IMR-90 (cell line): ENCODE measurements at regions of chr1 and their contacts with region 1.

Region 1: GRCh38 chr1:62746085-62746808 is 37.7 kb upstream of the ATG4C start:
- DNase-seq: peak; percentile 70
- ATAC-seq: peak; percentile 69
- H3K4me3 ChIP-seq: no peak overlapping the region; the same call in 1 of the 2 replicates
- H3K27ac ChIP-seq: no peak overlapping the region
- H3K4me1 ChIP-seq: peaks cover 4% of the 10 kb centered on the region; the same call in 1 of the 2 replicates
- H3K27me3 ChIP-seq: no peaks in the 10 kb centered on the region
- CTCF ChIP-seq: peak; percentile 71
- POLR2A ChIP-seq: no peak
- RAD21 ChIP-seq: peak; percentile 93

Region 2: GRCh38 chr1:62175568-62176179 is 570.6 kb before region 1 on chr1:
- CTCF ChIA-PET with region 1: interaction called, 5 read pairs
- POLR2A ChIA-PET with region 1: no interaction called
- dilution Hi-C with region 1: no loop called
- in situ Hi-C with region 1: loop called (anchors 25 kb)
- intact Hi-C with region 1: loop called (anchors 2 kb)
- DNase-seq: peak; percentile 45
- ATAC-seq: peak; percentile 66
- H3K4me3 ChIP-seq: no peak overlapping the region
- H3K27ac ChIP-seq: no peak overlapping the region
- H3K4me1 ChIP-seq: no peaks in the 10 kb centered on the region
- H3K27me3 ChIP-seq: no peaks in the 10 kb centered on the region; the same call in none of the 2 replicates
- CTCF ChIP-seq: peak; percentile 79
- POLR2A ChIP-seq: no peak
- RAD21 ChIP-seq: peak; percentile 71

Region 3: GRCh38 chr1:62370594-62370993 is 375.7 kb before region 1 on chr1:
- CTCF ChIA-PET with region 1: no interaction called
- POLR2A ChIA-PET with region 1: no interaction called
- dilution Hi-C with region 1: no loop called
- in situ Hi-C with region 1: no loop called
- intact Hi-C with region 1: no loop called
- DNase-seq: no peak
- ATAC-seq: no peak
- H3K4me3 ChIP-seq: no peak overlapping the region
- H3K27ac ChIP-seq: no peak overlapping the region
- H3K4me1 ChIP-seq: no peaks in the 10 kb centered on the region
- H3K27me3 ChIP-seq: no peaks in the 10 kb centered on the region
- CTCF ChIP-seq: no peak
- POLR2A ChIP-seq: no peak
- RAD21 ChIP-seq: no peak

Region 4: GRCh38 chr1:62407405-62408009 is 338.7 kb before region 1 on chr1:
- CTCF ChIA-PET with region 1: no interaction called
- POLR2A ChIA-PET with region 1: no interaction called
- dilution Hi-C with region 1: no loop called
- in situ Hi-C with region 1: no loop called
- intact Hi-C with region 1: loop called (anchors 1 kb)
- DNase-seq: peak; percentile 55
- ATAC-seq: peak; percentile 89
- H3K4me3 ChIP-seq: no peak overlapping the region
- H3K27ac ChIP-seq: no peak overlapping the region
- H3K4me1 ChIP-seq: no peaks in the 10 kb centered on the region
- H3K27me3 ChIP-seq: peaks cover 8% of the 10 kb centered on the region
- CTCF ChIP-seq: peak; percentile 79
- POLR2A ChIP-seq: no peak
- RAD21 ChIP-seq: peak; percentile 81

Region 5: DNA sequence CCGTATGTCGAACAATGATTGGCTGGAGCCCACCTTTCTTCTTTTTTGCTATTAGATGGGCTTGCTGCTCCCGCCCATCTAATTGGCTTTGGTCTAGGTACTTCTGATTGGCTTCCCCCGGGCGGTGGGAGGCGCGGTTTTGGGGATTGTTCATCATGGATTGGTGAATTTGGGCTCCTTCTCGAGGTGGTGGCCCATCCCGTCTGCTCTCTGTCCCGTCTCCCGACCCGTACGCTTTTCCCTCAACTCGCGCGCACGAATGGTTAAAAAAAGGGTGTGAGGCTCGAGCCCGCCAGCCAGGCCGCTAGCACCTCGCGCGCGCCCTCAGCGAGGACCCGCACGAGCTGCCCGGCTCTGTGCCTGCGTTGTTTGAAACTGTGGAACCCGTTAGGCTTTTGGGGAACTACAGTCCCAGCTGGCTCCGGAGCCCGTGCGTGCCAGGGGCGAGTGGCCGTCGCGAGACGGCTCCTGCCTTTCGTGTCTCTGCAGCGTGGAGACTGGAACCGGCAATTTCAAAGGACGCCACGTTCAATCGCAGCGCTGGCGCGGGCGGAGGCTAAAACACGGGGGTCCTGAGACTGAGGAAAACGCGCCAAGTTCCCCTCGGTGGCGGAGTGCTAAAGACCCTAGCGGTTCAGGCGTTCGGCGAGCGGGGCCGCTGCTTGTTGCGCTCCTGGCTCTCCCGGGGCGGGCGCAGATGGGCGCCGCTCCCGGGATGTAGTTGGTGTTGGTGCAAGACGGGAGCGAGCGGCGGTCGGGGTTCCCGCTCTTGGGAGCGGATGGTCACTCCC is 309.6 kb before region 1 on chr1 and contains the start of gene USP1:
- CTCF ChIA-PET with region 1: no interaction called
- POLR2A ChIA-PET with region 1: interaction called, 4 read pairs
- dilution Hi-C with region 1: no loop called
- in situ Hi-C with region 1: no loop called
- intact Hi-C with region 1: loop called (anchors 2 kb)
- DNase-seq: peak; percentile 100
- ATAC-seq: peak; percentile 91
- H3K4me3 ChIP-seq: peak within 1 kb of the TSS; percentile 82
- H3K27ac ChIP-seq: peak within 1 kb of the TSS; percentile 99
- H3K4me1 ChIP-seq: peaks cover 3% of the 10 kb centered on the region; the same call in 1 of the 2 replicates
- H3K27me3 ChIP-seq: peaks cover under 1% of the 10 kb centered on the region; the same call in 1 of the 2 replicates
- CTCF ChIP-seq: no peak
- POLR2A ChIP-seq: peak; percentile 41; the same call in 1 of the 2 replicates
- RAD21 ChIP-seq: no peak
- total RNA-seq, gene USP1: 9.7 and 26.1 TPM in 2 replicates

Region 6: DNA sequence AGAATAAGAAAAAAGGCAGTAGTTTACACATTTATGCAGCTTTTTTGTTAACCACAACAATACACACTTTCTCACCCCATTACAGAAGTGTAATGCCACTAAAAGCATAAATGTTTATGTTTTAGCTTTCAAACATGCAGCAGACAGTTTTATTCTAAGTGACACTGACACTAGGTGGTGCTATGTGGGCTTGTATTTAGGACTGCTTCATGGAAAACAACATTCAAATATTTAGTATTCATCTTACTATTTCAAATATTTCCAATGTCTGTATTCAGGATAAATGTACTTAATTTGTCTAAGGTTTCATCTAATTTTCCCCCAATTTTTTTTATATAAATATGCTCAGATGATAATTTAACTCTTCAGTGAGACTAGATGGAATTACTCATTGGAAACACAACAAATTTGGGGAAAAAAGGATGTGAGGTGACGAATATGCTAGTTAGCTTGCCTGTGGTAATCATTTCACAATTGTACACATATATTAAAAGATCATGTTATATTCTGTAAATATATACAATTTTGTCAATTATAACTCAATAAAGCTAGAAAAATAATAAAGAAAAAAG is 238.0 kb before region 1 on chr1:
- CTCF ChIA-PET with region 1: interaction called, 12 read pairs
- POLR2A ChIA-PET with region 1: no interaction called
- dilution Hi-C with region 1: no loop called
- in situ Hi-C with region 1: loop called (anchors 5 kb)
- intact Hi-C with region 1: loop called (anchors 1 kb)
- DNase-seq: peak; percentile 65
- ATAC-seq: peak; percentile 56
- H3K4me3 ChIP-seq: no peak overlapping the region
- H3K27ac ChIP-seq: no peak overlapping the region
- H3K4me1 ChIP-seq: no peaks in the 10 kb centered on the region
- H3K27me3 ChIP-seq: no peaks in the 10 kb centered on the region
- CTCF ChIP-seq: peak; percentile 63
- POLR2A ChIP-seq: no peak
- RAD21 ChIP-seq: peak; percentile 52

Region 7: GRCh38 chr1:62530516-62531154 is 215.6 kb before region 1 on chr1:
- CTCF ChIA-PET with region 1: interaction called, 3 read pairs
- POLR2A ChIA-PET with region 1: no interaction called
- dilution Hi-C with region 1: no loop called
- in situ Hi-C with region 1: no loop called
- intact Hi-C with region 1: loop called (anchors 1 kb)
- DNase-seq: peak; percentile 40
- ATAC-seq: peak; percentile 78
- H3K4me3 ChIP-seq: no peak overlapping the region
- H3K27ac ChIP-seq: no peak overlapping the region
- H3K4me1 ChIP-seq: no peaks in the 10 kb centered on the region
- H3K27me3 ChIP-seq: no peaks in the 10 kb centered on the region
- CTCF ChIP-seq: peak; percentile 56
- POLR2A ChIP-seq: no peak
- RAD21 ChIP-seq: peak; percentile 59

Region 8: DNA sequence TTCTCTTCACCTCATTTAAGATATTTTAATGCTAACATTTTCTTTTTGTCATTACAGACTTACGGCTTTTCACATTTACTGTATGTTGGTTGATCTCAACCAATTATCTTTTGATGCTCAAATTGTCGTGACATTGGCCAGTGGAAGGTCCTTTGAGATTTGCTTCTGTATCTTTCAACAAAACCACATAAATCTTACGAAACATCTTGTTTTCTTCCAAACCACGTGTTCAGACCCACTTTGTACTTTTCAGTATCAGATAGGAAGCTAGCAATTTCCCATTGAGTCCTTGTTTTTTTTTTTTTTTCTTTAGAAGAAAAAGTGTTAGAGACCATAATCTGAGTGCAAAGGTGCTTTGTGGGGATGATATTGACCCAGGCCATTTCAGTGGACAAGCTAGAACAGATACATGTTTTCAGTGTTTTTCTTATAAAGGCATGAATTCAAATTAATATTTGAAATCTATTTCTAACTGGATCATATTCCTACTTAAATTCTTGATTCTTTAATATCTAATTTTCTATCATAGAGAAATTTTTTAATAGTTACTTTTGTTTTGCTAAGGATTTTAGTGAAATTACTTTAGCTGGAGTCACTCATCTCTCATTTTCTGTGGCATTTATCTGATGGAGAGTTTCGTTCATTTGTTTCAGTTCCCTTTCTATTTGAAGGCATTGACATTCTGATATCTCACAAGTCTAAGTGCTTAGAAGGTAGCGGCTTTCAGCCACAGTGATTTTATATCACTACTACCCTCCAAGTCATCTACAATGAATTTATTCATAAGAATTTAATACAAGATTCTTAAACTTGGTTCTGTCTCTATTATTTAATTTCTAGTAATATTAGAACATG is 64.4 kb after region 1 on chr1:
- CTCF ChIA-PET with region 1: no interaction called
- POLR2A ChIA-PET with region 1: no interaction called
- dilution Hi-C with region 1: no loop called
- in situ Hi-C with region 1: no loop called
- intact Hi-C with region 1: no loop called
- DNase-seq: no peak
- ATAC-seq: no peak
- H3K4me3 ChIP-seq: no peak overlapping the region
- H3K27ac ChIP-seq: no peak overlapping the region
- H3K4me1 ChIP-seq: no peaks in the 10 kb centered on the region
- H3K27me3 ChIP-seq: no peaks in the 10 kb centered on the region
- CTCF ChIP-seq: no peak
- POLR2A ChIP-seq: no peak
- RAD21 ChIP-seq: no peak

Region 9: DNA sequence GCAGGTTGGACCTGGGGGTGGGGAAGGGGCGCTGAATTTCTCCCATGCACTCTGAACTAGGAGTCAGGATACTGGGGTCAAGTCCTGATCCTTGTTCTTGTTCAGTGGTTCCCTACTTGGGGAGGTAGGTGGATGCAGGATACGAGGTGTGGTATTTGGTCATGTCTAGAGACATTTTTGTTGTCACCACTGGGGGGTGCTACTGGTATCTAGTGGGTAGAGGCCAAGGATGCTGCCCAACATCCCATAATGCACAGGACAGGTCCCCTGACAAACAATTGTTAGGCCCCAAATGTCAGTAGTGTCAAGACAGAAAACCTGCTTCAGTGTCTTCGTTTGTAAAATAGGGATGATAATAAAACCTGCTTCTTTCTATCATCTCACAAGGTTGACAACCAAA is 317.1 kb after region 1 on chr1:
- CTCF ChIA-PET with region 1: no interaction called
- POLR2A ChIA-PET with region 1: no interaction called
- dilution Hi-C with region 1: no loop called
- in situ Hi-C with region 1: no loop called
- intact Hi-C with region 1: no loop called
- DNase-seq: no peak
- ATAC-seq: no peak
- H3K4me3 ChIP-seq: no peak overlapping the region
- H3K27ac ChIP-seq: no peak overlapping the region
- H3K4me1 ChIP-seq: no peaks in the 10 kb centered on the region
- H3K27me3 ChIP-seq: no peaks in the 10 kb centered on the region
- CTCF ChIP-seq: no peak
- POLR2A ChIP-seq: no peak
- RAD21 ChIP-seq: no peak